AG04449 (cell line): ENCODE measurements at regions of chr11 and their contacts with region 1.

Region 1: DNA sequence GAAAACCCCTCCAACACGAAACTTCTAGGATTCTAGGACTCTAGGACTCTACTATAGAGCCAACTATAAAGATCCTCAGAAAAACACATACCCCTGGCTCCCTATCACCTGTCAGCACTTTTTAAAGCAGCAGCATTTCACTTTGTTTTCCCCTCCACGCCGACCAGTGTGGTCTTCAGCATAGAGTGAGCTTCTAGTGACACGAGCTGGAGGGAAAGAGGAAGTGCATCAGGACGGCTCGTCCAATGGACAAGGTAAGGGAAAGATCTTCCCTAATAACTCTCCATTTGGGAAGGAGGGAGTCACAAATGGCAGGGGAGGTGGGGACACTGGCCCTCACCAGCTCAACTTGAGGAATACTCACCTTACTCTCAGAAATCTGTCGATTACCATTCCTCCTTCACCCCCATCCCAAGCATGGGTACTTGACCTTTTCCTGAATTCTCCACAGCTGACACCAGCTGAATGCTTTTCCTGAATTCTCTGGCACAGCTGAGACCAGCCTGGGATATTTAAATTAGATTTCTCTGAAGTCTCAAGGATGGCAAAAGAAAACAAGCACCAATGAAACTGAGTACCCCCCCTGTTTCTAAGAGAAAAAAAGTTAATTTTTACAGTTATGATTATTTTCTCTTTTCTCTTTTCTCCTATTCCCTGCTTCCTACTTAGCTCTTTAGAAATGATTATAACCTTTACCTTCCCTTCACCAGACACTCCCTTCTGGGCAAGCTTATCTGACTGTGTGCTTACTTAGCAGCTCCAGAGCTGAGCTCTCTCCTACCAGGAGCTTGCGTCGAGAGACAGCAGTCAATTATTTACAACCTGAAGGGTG is 33.3 kb upstream of the NNMT start:
- DNase-seq: no peak
- H3K4me3 ChIP-seq: no peak overlapping the region
- CTCF ChIP-seq: peak; percentile 72

Region 2: GRCh38 chr11:113806406-113806805 is 456.5 kb before region 1 on chr11:
- CTCF ChIA-PET with region 1: interaction called, 45 read pairs
- POLR2A ChIA-PET with region 1: no interaction called
- DNase-seq: no peak
- H3K4me3 ChIP-seq: no peak overlapping the region
- CTCF ChIP-seq: peak; percentile 45

Region 3: DNA sequence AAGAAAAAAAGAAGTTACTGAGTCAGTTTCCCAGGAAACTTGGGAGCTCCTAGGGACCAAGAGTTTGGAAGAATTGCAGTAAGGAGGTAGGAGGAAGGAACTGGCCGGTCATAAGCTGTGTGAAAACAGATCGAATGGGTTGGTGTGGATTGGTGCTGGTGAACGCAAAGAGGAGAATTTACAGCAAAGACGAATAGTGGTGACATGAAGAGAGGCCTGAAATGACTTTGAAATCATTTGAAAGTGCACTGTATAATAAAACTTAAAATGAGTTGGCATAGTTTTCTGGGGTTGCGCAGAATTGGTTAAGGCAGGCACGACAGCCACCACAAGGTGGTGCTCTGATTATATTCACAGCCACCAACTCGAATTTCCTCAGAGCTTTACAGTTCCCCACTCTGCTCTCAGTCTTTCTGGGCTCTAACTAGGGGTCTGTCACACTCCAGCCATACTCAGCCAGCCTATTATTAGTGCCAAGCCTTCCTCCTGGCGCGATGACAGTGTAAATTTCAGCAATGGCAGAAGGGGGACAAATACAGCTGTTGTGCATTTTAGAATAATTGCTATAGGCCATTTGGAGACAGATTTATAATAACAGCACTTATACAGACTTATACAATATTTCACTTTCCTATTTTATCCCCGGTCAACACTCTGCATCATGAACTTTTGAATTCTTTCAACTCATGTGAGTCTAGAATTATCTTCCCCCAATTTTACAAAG is 366.6 kb before region 1 on chr11:
- CTCF ChIA-PET with region 1: interaction called, 279 read pairs
- POLR2A ChIA-PET with region 1: interaction called, 4 read pairs
- DNase-seq: no peak
- H3K4me3 ChIP-seq: no peak overlapping the region
- CTCF ChIP-seq: peak; percentile 64

Region 4: GRCh38 chr11:113994077-113994954 is 268.6 kb before region 1 on chr11:
- CTCF ChIA-PET with region 1: interaction called, 251 read pairs
- POLR2A ChIA-PET with region 1: no interaction called
- DNase-seq: no peak
- H3K4me3 ChIP-seq: no peak overlapping the region
- CTCF ChIP-seq: peak; percentile 47

Region 5: GRCh38 chr11:114026355-114026754 is 236.5 kb before region 1 on chr11:
- CTCF ChIA-PET with region 1: interaction called, 40 read pairs
- POLR2A ChIA-PET with region 1: no interaction called
- DNase-seq: no peak
- H3K4me3 ChIP-seq: no peak overlapping the region
- CTCF ChIP-seq: no peak

Region 6: DNA sequence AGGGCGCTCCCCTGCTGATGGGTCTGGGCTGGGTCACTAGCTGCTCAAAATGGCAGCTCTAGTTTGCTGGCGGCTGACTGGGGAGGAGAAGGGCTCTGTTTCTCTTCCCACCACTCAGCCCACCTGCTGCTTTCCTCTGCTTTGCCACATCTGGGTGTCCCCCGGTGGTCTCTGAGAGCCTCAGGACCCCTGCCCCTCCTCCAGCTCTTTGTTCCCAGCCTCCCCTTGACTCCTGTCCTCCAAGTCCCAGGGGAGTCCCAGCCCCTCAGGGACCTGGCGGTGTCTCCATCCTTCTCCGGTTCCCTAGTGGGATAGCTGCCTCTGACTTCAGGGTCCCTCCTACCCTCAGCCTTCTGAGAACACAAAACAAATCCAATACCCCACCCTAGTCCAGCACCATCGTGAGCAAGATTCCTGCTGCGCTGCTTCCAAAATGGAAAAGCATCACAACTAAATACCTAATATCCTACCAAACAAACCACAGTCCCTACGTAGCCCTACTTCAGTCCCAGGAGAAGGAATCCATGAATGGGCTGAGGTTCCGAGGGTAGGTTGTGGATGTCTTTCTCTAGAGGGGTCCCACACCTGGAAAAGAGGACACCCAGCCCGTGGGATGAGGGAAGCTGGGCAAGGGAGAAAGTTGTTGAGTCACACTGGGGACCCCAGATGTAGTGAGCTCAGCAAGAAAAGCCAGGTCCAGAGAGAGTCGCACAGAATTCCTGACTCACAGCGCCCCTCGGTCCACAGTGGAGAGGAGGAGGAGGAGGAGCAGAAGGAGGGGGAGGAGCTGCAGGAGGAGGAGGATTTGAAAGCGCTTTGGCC is 11.7 kb before region 1 on chr11:
- CTCF ChIA-PET with region 1: interaction called, 64 read pairs
- POLR2A ChIA-PET with region 1: no interaction called
- DNase-seq: no peak
- H3K4me3 ChIP-seq: no peak overlapping the region
- CTCF ChIP-seq: no peak

Region 7: GRCh38 chr11:114295676-114296604 is 33.0 kb after region 1 on chr11 and contains the start of gene NNMT:
- CTCF ChIA-PET with region 1: no interaction called
- POLR2A ChIA-PET with region 1: no interaction called
- DNase-seq: peak; percentile 95
- H3K4me3 ChIP-seq: peak within 1 kb of the TSS; percentile 83
- CTCF ChIP-seq: peak; percentile 23

Region 8: GRCh38 chr11:114366331-114367243 is 103.7 kb after region 1 on chr11:
- CTCF ChIA-PET with region 1: no interaction called
- POLR2A ChIA-PET with region 1: no interaction called
- DNase-seq: peak; percentile 70
- H3K4me3 ChIP-seq: 0 out of 2 replicates have a peak overlapping the region, but pooled peaks have one; percentile 2
- CTCF ChIP-seq: no peak

Region 9: GRCh38 chr11:114586797-114587196 is 323.9 kb after region 1 on chr11:
- CTCF ChIA-PET with region 1: no interaction called
- POLR2A ChIA-PET with region 1: no interaction called
- DNase-seq: no peak
- H3K4me3 ChIP-seq: no peak overlapping the region
- CTCF ChIP-seq: peak; percentile 7